ENCODE measurements at regions of chr1 and their contacts with region 1.

Region 1: DNA sequence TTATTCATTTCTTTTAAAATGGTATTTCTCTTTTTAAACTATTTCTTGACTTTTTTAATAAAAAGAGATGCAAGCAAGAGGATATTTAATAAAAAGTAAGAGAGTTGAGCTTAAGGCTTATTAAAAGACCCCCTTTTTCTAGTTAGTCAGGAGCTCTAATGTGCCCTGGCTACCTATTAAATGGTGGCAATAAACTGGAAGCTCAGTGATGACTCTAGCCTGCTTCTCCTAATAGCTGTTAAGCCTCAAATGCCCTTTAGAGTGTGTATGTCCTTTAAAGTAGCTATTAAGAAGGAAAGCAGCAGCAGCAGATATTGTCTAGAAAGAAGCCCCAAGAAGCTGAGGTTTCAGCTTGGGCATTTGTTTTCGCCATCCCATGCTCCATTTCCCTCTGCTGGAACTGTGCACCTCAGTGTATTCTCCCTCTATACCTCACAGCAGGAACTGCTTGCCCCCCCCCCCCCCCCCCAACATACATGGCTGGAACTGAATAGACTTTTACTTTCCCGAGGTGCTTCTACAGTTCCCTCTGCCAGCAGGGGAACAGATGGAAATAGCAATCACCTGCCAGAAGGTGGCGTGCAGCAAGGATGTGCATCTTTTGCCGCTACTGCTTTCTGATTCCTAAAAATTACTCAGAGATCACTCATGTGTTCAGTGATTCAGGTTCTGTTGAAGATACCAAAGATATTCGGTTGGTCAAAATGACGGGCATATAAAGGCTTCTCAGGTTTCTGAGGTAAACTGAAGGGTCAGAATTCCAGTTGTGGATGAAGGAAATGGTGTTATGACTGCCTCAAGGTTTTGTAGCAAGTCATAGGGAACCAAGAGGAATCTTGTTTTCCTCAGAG is 2.5 kb downstream of the RGS4 start:
- DNase-seq: peak; percentile 87
- H3K4me3 ChIP-seq: no peak overlapping the region
- H3K27ac ChIP-seq: peak overlapping the region; percentile 26
- H3K4me1 ChIP-seq: peaks cover 19% of the 10 kb centered on the region
- H3K27me3 ChIP-seq: no peaks in the 10 kb centered on the region
- CTCF ChIP-seq: peak; percentile 89 to 93

Region 2: DNA sequence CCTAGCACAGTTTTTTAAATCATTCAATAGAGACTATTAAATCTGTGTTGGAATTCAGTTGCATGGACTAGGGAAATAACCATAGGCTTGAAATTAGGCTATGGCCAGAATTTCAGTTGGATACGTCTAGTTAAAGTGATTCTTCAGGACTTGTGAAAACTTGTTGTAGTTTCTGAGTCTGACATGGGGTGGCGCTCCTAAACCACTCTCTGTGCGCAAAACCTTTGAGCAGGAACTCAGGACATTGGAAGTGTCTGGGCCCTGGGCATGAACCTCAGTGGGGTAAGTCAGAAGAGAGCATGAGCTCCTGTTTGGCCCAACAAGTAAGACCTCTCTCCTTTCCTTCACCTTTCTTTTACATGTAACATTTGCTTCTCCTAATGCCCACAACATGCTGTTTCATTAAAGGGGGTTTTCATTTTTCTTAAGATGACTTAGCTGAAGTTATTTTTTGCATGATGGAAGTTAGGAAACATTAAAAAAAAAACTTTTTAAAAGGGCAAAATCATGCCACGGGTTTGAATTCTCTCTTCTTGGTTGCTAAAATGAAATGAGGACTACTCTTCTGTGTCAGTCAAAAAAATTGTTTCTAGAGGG is 193.5 kb before region 1 on chr1:
- CTCF ChIA-PET with region 1: interaction called, 4 read pairs
- dilution Hi-C with region 1: no loop called
- in situ Hi-C with region 1: loop called in 1 of 2 experiments (anchors 10 kb)
- intact Hi-C with region 1: loop called (anchors 1 kb)
- DNase-seq: peak; percentile 67
- H3K4me3 ChIP-seq: no peak overlapping the region
- H3K27ac ChIP-seq: no peak overlapping the region
- H3K4me1 ChIP-seq: no peaks in the 10 kb centered on the region
- H3K27me3 ChIP-seq: no peaks in the 10 kb centered on the region
- CTCF ChIP-seq: peak; percentile 81 to 89

Region 3: GRCh38 chr1:163029901-163030300 is 41.7 kb before region 1 on chr1:
- CTCF ChIA-PET with region 1: no interaction called
- dilution Hi-C with region 1: loop called (anchors 5 kb)
- in situ Hi-C with region 1: no loop called
- intact Hi-C with region 1: no loop called
- DNase-seq: no peak
- H3K4me3 ChIP-seq: no peak overlapping the region
- H3K27ac ChIP-seq: no peak overlapping the region
- H3K4me1 ChIP-seq: peaks cover 7% of the 10 kb centered on the region
- H3K27me3 ChIP-seq: no peaks in the 10 kb centered on the region
- CTCF ChIP-seq: no peak

Region 4: DNA sequence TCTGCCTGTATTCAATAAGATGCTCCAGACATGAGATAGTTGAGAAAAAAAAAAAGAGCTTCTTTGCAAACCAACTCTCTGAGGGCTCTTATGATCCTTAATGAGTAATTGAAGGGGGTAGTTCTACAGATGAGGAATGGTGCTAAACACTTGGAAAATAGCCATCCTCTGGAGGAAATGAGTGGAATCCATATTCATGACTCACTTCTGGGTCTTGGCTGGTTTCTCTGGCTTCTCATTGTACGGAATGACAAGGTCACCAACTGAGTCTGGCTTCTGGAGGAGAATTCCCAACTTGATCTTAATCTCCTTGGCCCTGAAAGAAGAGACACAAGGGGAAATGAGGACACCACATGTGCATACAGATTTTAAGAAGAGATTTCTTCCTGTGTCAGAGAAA is 96.4 kb after region 1 on chr1:
- CTCF ChIA-PET with region 1: no interaction called
- dilution Hi-C with region 1: no loop called
- in situ Hi-C with region 1: loop called (anchors 10 kb)
- intact Hi-C with region 1: loop called (anchors 1 kb)
- DNase-seq: peak; percentile 87
- H3K4me3 ChIP-seq: no peak overlapping the region
- H3K27ac ChIP-seq: no peak overlapping the region
- H3K4me1 ChIP-seq: peaks cover 16% of the 10 kb centered on the region
- H3K27me3 ChIP-seq: no peaks in the 10 kb centered on the region
- CTCF ChIP-seq: no peak

Region 5: DNA sequence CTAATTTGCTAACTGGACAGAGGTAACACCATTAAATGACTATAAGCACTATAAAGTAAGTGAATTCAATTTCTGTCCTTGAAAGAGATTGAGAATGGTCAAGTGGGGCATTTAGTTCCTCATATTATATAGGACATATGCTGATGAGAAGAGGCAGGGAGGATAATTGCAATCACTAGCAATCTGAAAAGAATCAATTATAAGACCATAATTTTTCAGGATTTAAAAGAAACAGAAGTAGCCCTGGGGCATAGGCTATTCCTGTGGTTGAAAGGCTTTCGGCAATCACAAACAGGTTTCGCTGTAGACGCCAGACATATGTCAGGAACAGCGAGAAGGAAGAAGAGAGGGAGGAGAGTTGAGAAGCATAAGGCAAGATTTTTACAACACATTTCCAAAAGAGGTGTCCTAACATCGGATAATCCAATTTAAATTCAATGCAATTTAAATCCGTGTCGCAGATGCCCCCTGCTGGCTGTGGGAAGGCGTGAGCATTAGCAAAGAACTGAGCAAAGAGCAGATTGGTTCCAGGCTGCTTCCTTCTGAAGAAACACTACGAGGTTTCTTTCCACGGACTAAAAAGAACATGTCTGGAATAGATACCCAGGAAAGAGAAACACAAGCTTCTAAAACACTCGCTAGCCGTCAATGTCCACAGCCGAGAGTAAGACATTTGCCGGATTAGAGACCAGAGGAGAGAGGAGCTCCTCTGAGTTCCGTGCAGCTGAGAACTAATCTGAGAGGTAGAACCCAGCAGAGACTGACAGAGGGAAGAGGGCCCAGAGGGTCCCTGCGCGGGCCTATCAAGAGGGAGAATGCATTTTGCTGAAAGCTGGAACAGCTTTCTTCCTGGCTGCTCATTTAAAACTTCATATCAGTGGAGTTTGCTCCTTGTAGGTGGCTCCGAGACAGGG is 103.2 kb after region 1 on chr1:
- CTCF ChIA-PET with region 1: no interaction called
- dilution Hi-C with region 1: no loop called
- in situ Hi-C with region 1: loop called (anchors 10 kb)
- intact Hi-C with region 1: loop called (anchors 1 kb)
- DNase-seq: peak; percentile 20
- H3K4me3 ChIP-seq: no peak overlapping the region
- H3K27ac ChIP-seq: no peak overlapping the region
- H3K4me1 ChIP-seq: no peaks in the 10 kb centered on the region
- H3K27me3 ChIP-seq: no peaks in the 10 kb centered on the region
- CTCF ChIP-seq: peak; percentile 78 to 92

Region 6: GRCh38 chr1:163315773-163316374 is 244.2 kb after region 1 on chr1:
- CTCF ChIA-PET with region 1: no interaction called
- dilution Hi-C with region 1: no loop called
- in situ Hi-C with region 1: loop called (anchors 10 to 25 kb)
- intact Hi-C with region 1: loop called (anchors 1 kb)
- DNase-seq: peak; percentile 10
- H3K4me3 ChIP-seq: no peak overlapping the region
- H3K27ac ChIP-seq: no peak overlapping the region
- H3K4me1 ChIP-seq: peaks cover 7% of the 10 kb centered on the region
- H3K27me3 ChIP-seq: no peaks in the 10 kb centered on the region
- CTCF ChIP-seq: peak; percentile 56 to 63

Region 7: DNA sequence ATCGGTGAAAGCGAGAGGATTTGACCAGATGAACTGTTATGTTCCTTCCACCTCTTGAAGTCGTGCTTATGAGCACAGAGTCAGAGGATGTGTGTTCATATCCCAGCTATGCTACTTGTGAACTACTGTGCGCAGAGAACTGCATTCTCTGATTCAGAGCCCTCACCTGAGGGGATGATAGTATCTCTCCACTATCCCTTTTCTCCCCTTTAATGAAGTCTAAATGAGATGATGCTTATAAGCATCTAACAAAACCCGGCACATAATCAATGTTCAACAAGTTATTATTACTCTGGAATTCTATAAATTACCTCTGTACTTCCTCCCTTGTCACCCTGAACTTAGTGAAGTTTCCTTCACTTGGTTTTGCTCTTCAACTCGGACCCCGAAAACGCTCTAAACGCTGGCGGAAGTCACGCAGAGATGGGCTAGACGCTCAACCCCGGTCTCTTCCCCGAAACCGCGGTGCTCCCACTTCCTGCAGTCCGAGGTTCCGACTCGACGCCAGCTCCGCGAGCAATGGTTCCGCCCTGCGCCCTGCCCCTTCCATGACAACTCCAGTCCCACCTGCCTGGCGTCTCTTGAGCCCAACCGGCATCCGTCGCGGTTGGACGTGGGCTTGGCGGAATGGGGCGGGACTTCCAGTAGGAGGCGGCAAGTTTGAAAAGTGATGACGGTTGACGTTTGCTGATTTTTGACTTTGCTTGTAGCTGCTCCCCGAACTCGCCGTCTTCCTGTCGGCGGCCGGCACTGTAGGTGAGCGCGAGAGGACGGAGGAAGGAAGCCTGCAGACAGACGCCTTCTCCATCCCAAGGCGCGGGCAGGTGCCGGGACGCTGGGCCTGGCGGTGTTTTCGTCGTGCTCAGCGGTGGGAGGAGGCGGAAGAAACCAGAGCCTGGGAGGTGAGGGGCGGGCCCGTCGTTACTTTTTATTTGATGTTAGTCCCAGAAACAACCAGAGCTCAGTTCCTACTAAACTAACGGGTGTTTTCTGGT is 250.0 kb after region 1 on chr1 and contains the start of gene NUF2:
- CTCF ChIA-PET with region 1: no interaction called
- dilution Hi-C with region 1: no loop called
- in situ Hi-C with region 1: loop called (anchors 10 to 25 kb)
- intact Hi-C with region 1: loop called (anchors 1 kb)
- DNase-seq: peak; percentile 98
- H3K4me3 ChIP-seq: peak within 1 kb of the TSS; percentile 82 to 100 (median 97)
- H3K27ac ChIP-seq: peak within 1 kb of the TSS; percentile 85
- H3K4me1 ChIP-seq: peaks cover 18% of the 10 kb centered on the region
- H3K27me3 ChIP-seq: no peaks in the 10 kb centered on the region
- CTCF ChIP-seq: no peak
- total RNA-seq, gene NUF2: 0.33 to 16.5 TPM

Region 8: GRCh38 chr1:163440090-163440489 is 368.5 kb after region 1 on chr1:
- CTCF ChIA-PET with region 1: no interaction called
- dilution Hi-C with region 1: no loop called
- in situ Hi-C with region 1: no loop called
- intact Hi-C with region 1: no loop called
- DNase-seq: no peak
- H3K4me3 ChIP-seq: no peak overlapping the region
- H3K27ac ChIP-seq: no peak overlapping the region
- H3K4me1 ChIP-seq: no peaks in the 10 kb centered on the region
- H3K27me3 ChIP-seq: no peaks in the 10 kb centered on the region
- CTCF ChIP-seq: no peak

Measured in mammary epithelial cell (primary cell).